CD8-positive, alpha-beta T cell (primary cell): ENCODE measurements at regions of chr19 and their contacts with region 1.

Region 1: GRCh38 chr19:15836595-15837337 is 21.3 kb upstream of the OR10H1 start:
- DNase-seq: peak; percentile 90 to 99 (median 95)
- ATAC-seq: peak; percentile 87
- H3K4me3 ChIP-seq: peak overlapping the region; percentile 64 to 78
- H3K4me3 Mint-ChIP-seq: peak overlapping the region; percentile 91
- H3K27ac ChIP-seq: peak overlapping the region; percentile 96 to 97
- H3K27ac Mint-ChIP-seq: peak overlapping the region; percentile 98
- H3K4me1 ChIP-seq: peaks cover 22% of the 10 kb centered on the region
- H3K4me1 Mint-ChIP-seq: peaks cover 31% of the 10 kb centered on the region
- H3K27me3 ChIP-seq: no peaks in the 10 kb centered on the region
- H3K27me3 Mint-ChIP-seq: no peaks in the 10 kb centered on the region
- CTCF ChIP-seq: no peak

Region 2: DNA sequence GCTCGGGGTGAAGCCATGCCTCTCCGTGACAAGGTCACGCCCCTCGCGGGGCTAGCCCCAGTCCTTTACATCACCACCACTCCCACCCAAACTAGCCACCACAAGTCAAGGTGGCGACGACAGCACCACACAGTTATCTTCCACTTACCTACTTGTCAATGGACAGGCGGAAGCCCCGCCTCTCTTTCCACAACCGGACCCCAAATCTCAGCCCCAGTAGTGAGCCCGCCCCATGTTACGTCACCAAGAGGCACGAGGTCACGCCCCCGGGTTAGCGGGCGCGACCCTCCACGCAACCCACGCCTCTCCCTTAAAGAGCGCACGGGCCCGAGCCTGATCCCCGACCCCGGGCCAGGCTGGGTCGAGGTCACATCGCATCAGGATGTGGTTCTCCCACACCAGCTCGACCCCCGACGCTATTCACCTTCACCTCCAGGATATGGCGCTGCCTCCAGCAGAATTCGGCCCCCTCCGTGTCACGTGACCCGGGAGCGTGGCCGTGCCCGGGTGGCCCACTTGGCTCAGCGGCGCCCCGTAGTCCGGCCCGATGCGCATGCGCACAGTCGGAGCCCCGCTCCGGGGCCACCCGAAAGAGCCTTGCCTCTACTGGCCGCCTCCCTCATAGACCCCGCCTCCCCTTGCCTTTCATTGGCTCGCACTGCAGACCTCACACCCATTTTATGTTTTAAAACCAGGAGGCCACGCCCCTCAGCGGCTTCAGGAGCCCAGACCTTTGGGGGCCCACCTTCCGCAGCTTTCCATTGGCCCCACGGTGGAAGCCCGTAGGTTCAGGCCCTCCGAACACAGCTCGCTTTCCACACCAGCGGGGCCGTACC is 711.3 kb before region 1 on chr19:
- CTCF ChIA-PET with region 1: no interaction called
- POLR2A ChIA-PET with region 1: interaction called, 3 read pairs
- intact Hi-C with region 1: loop called in 1 of 2 experiments (anchors 2 kb)
- DNase-seq: peak; percentile 94 to 99 (median 97)
- ATAC-seq: peak; percentile 85
- H3K4me3 ChIP-seq: peak overlapping the region; percentile 98 to 99
- H3K4me3 Mint-ChIP-seq: peak overlapping the region; percentile 99
- H3K27ac ChIP-seq: peak overlapping the region; percentile 91 to 98
- H3K27ac Mint-ChIP-seq: peak overlapping the region; percentile 98
- H3K4me1 ChIP-seq: peaks cover 34% of the 10 kb centered on the region
- H3K4me1 Mint-ChIP-seq: peaks cover 47% of the 10 kb centered on the region
- H3K27me3 ChIP-seq: no peaks in the 10 kb centered on the region
- H3K27me3 Mint-ChIP-seq: no peaks in the 10 kb centered on the region
- CTCF ChIP-seq: no peak

Region 3: DNA sequence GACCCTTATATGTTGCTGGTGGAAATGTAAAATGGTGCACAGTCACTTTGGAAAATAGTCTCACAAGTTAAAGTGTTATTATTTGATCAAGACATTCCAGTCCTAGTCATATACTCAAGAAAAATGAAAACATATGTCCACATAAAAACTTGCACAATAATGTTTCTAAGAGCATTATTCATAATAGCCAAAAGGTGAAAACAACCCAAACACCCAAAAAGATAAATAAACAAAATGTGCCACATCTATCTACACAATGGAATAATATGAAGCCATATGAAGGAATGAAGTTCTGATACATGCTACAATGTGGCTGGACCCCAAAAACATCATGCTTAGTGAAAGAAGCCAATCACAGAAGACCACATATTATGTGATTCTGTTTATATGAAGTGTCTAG is 442.8 kb before region 1 on chr19:
- CTCF ChIA-PET with region 1: no interaction called
- POLR2A ChIA-PET with region 1: no interaction called
- intact Hi-C with region 1: no loop called
- DNase-seq: no peak
- ATAC-seq: no peak
- H3K4me3 ChIP-seq: no peak overlapping the region
- H3K4me3 Mint-ChIP-seq: no peak overlapping the region
- H3K27ac ChIP-seq: no peak overlapping the region
- H3K27ac Mint-ChIP-seq: no peak overlapping the region
- H3K4me1 ChIP-seq: no peaks in the 10 kb centered on the region
- H3K4me1 Mint-ChIP-seq: peaks cover 14% of the 10 kb centered on the region
- H3K27me3 ChIP-seq: no peaks in the 10 kb centered on the region
- H3K27me3 Mint-ChIP-seq: no peaks in the 10 kb centered on the region
- CTCF ChIP-seq: no peak

Region 4: DNA sequence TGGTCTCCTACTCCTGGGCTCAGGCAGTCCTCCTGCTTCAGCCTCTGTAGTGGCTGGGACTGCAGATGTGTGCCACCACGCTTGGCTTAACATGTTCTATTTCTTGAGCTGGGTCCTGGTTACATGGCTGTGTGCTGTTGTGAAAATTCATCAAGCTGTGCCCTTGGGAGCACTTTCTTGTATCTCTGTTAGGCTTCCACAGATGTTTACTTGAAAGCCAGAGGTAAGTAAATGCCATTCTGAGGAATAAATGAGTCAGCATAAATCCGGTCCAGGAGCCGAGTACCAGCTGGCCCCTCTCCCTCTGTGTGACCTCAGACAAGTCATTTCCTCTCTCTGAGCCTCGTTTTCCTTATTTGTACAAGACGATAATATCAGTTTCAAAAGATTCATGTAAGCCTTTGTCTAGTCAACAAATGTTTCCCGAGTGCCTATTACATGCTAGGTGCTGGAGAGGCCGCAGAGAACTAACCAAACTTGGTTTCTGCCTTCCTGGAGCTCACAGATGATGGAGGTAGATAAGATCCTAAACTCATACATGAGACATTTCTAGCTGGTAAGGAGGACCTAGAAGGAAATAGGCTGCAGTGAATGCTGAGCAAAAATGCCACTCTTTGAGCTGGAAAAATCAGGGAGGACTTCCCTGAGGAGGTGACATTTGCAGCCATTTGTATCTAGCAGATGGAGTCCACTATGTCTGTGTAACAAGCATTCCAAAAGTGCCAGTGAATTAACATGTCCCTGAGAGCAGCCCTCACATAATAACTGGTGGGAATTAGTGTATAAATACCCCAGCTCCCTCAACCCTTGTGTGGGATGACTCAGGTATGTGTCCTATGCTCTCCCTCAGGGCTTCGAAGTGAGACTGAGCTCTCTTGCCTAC is 369.7 kb before region 1 on chr19:
- CTCF ChIA-PET with region 1: no interaction called
- POLR2A ChIA-PET with region 1: no interaction called
- intact Hi-C with region 1: loop called in 1 of 2 experiments (anchors 10 kb)
- DNase-seq: peak in 8 of 9 experiments; percentile 32 to 75 (median 59)
- ATAC-seq: peak; percentile 25
- H3K4me3 ChIP-seq: no peak overlapping the region
- H3K4me3 Mint-ChIP-seq: peak overlapping the region; percentile 50
- H3K27ac ChIP-seq: peak overlapping the region in 1 of 2 experiments; percentile 68
- H3K27ac Mint-ChIP-seq: peak overlapping the region; percentile 89
- H3K4me1 ChIP-seq: peaks cover 58% of the 10 kb centered on the region
- H3K4me1 Mint-ChIP-seq: peaks cover 61% of the 10 kb centered on the region
- H3K27me3 ChIP-seq: no peaks in the 10 kb centered on the region
- H3K27me3 Mint-ChIP-seq: no peaks in the 10 kb centered on the region
- CTCF ChIP-seq: no peak

Region 5: GRCh38 chr19:15717809-15718208 is 119.0 kb before region 1 on chr19:
- CTCF ChIA-PET with region 1: no interaction called
- POLR2A ChIA-PET with region 1: no interaction called
- intact Hi-C with region 1: no loop called
- DNase-seq: no peak
- ATAC-seq: no peak
- H3K4me3 ChIP-seq: no peak overlapping the region
- H3K4me3 Mint-ChIP-seq: no peak overlapping the region
- H3K27ac ChIP-seq: no peak overlapping the region
- H3K27ac Mint-ChIP-seq: no peak overlapping the region
- H3K4me1 ChIP-seq: no peaks in the 10 kb centered on the region
- H3K4me1 Mint-ChIP-seq: no peaks in the 10 kb centered on the region
- H3K27me3 ChIP-seq: no peaks in the 10 kb centered on the region
- H3K27me3 Mint-ChIP-seq: peaks cover 35% of the 10 kb centered on the region
- CTCF ChIP-seq: no peak

Region 6: GRCh38 chr19:15862444-15862843 is 25.7 kb after region 1 on chr19:
- CTCF ChIA-PET with region 1: no interaction called
- POLR2A ChIA-PET with region 1: no interaction called
- intact Hi-C with region 1: no loop called
- DNase-seq: peak in 1 of 9 experiments; percentile 25
- ATAC-seq: no peak
- H3K4me3 ChIP-seq: no peak overlapping the region
- H3K4me3 Mint-ChIP-seq: no peak overlapping the region
- H3K27ac ChIP-seq: no peak overlapping the region
- H3K27ac Mint-ChIP-seq: no peak overlapping the region
- H3K4me1 ChIP-seq: no peaks in the 10 kb centered on the region
- H3K4me1 Mint-ChIP-seq: no peaks in the 10 kb centered on the region
- H3K27me3 ChIP-seq: no peaks in the 10 kb centered on the region
- H3K27me3 Mint-ChIP-seq: peaks cover 2% of the 10 kb centered on the region
- CTCF ChIP-seq: no peak

Region 7: GRCh38 chr19:16197622-16198369 is 361.0 kb after region 1 on chr19 and contains the start of gene AP1M1:
- CTCF ChIA-PET with region 1: no interaction called
- POLR2A ChIA-PET with region 1: no interaction called
- intact Hi-C with region 1: loop called in 1 of 2 experiments (anchors 5 kb)
- DNase-seq: peak; percentile 95 to 99 (median 98)
- ATAC-seq: peak; percentile 82
- H3K4me3 ChIP-seq: peak within 1 kb of the TSS; percentile 98 to 99
- H3K4me3 Mint-ChIP-seq: peak within 1 kb of the TSS; percentile 93
- H3K27ac ChIP-seq: peak within 1 kb of the TSS; percentile 87 to 98
- H3K27ac Mint-ChIP-seq: peak within 1 kb of the TSS; percentile 97
- H3K4me1 ChIP-seq: peaks cover 54% of the 10 kb centered on the region
- H3K4me1 Mint-ChIP-seq: peaks cover 49% of the 10 kb centered on the region
- H3K27me3 ChIP-seq: no peaks in the 10 kb centered on the region
- H3K27me3 Mint-ChIP-seq: no peaks in the 10 kb centered on the region
- CTCF ChIP-seq: no peak
- total RNA-seq, gene AP1M1: 76.2 to 83.4 TPM

Region 8: DNA sequence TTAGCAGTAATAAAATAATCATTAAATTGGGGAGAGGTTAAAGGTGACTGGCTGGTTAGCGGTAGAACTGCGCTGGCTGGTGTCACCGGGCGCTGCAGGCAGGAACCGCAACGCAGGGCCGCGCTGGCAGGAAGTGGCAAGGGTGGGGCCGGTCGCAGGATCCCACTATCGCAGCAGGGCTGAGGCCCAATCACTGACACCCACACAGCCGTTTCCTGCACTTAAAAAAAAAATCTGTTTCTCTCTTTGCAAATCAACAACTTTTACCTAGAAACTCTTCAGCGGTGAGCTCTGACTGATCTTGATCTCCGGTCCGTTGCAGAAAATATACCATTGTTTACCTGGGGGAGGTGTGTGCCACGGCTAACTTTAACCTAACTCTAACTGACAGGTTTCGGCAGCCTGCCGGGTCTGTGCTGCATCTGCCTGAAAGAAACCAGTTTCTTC is 534.8 kb after region 1 on chr19:
- CTCF ChIA-PET with region 1: no interaction called
- POLR2A ChIA-PET with region 1: interaction called, 5 read pairs
- intact Hi-C with region 1: loop called in 1 of 2 experiments (anchors 2 kb)
- DNase-seq: peak; percentile 87 to 97 (median 92)
- ATAC-seq: peak; percentile 41
- H3K4me3 ChIP-seq: peak overlapping the region; percentile 33 to 44
- H3K4me3 Mint-ChIP-seq: no peak overlapping the region
- H3K27ac ChIP-seq: peak overlapping the region; percentile 91 to 95
- H3K27ac Mint-ChIP-seq: no peak overlapping the region
- H3K4me1 ChIP-seq: peaks cover 95% of the 10 kb centered on the region
- H3K4me1 Mint-ChIP-seq: peaks cover 68% of the 10 kb centered on the region
- H3K27me3 ChIP-seq: no peaks in the 10 kb centered on the region
- H3K27me3 Mint-ChIP-seq: no peaks in the 10 kb centered on the region
- CTCF ChIP-seq: no peak